ENCODE measurements at regions of chr1 and their contacts with region 1.

Region 1: DNA sequence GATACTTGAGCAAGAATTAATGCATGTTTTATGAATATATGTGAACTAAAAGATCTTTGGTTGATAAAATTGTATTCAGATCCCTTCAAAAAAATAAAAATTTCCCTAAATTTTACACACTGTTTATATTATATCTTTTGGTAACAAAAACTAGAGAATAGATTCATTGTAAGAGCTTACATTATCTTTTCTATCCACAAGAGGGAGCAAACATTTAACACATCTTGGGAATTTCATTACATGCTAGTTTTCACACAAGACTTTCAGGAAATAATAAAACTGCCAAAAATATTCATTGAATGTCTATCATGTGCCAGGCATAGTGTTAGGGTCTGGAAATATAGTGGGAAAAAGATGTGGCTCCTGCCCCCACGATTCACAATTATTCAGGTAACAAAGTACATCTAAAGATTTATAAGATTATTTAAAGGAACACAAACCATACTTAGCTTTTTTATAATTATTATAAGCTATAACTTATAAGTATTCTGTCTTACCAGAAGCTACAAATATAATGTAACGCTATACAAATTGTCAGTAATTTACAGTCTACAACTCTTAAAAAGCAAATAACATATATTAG is 30.6 kb downstream of the FAF1 start:
- DNase-seq: no peak

Region 2: DNA sequence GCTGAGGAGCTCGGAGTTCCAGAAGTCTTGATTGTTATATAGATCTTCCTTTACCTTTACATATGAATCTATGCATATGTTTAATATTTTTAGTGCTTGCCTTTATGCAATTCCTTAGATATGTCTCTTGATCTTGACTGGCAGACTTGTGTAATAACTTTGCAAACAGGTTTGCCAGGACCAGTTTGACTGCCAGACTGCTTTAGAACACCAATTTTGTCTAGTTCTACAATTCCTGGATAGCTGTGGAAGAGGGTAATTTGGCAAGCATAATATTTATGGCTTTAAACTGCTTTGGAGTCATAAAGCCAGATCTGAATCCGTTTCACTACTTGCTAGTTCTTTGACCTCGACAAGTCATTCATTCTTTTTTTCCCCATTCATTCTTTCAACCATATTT is 219.4 kb before region 1 on chr1:
- intact Hi-C with region 1: no loop called
- DNase-seq: no peak

Region 3: DNA sequence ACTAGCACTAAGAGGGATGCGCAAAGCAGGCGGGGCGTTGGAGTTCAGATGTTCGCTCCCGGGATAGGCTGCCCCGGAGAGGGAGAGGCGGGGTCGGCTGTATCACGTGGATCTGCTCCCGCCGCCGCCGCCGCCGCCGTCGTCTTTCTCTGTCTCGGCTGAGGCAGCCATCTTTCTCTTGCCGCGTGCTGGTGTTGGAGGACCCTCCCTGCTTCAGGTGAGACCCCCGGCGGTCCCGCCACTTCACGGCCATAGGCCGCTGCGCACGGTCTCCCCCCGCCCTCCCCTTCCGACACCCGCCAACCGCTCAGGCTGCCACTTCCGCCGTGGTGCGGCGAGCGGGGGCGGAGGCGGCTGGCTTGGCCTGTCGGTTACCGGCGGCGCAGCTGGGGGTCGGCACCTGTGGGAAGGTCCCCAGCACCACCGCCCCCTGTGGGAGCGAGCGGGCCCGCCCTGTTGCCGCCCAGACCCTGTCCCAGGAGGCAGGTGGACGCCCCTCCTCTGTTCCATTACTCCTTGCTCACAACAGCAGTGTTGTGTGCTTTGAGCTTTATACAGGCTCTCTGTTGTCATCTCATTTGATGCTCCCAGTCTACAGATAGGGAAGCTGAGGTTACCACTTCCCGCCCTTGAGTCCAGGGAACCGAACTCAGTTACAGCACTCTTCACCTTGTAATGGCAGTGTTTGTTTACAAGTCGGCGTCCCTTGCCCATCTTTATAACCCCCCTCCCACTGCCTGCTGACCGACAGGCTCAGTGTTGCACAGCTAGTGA is 1126.9 kb after region 1 on chr1 and contains the start of gene BTF3L4:
- intact Hi-C with region 1: loop called in 1 of 2 experiments (anchors 5 kb)
- DNase-seq: peak; percentile 98
- total RNA-seq, gene BTF3L4: 36.6 to 41.5 TPM